Gastrocnemius medialis (tissue), 4 donors: ENCODE measurements at regions of chr7 and their contacts with region 1.

Region 1: DNA sequence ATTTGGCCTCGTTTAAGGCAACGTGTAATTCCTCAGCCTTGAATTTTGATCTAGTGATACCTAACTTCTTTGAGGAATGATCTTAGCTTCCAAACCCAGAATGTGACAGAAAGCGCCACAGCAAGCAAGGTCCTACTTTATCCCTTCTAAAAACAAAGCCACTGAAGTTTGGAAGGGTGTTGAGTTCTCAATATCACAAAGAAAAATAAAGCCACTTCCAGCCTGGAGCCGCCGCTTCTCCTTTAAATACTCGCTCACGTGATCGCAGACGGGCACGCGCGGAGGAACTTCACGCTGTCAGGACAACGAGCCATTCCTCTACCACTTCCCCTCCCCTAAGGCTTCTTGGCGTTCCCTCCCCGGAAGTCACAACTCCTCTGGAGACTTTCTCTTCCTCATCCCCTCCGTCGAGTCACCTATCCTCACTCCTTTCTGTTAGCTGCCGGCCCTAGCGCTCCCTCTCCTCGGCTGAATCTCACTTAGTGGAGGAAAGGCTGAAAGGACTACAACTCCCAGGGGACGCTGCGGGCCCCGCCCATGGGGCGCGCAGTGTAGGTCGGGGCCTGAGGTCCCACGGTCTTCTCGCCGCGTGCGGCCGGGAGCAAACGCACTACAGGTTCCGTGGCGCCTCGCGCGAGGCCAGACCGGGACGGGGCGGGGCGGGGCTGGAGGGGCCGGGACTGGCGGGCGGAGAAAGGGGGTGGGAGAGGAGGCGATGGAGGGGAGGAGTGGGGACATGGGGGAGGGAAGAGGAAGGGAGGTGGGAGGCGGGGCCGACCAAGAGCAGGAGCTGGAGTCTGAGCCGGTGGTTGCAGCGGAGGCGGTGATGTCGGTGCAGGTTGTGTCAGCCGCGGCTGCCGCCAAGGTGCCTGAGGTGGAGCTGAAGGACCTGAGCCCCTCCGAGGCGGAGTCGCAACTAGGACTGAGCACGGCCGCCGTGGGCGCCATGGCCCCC is at the start of gene AHCYL2:
- DNase-seq: peak; percentile 97
- ATAC-seq: peak; percentile 89 to 90
- H3K4me3 ChIP-seq: peak within 1 kb of the TSS; percentile 67 to 82 (median 70)
- H3K27ac ChIP-seq: peak within 1 kb of the TSS; percentile 91 to 98 (median 94)
- H3K4me1 ChIP-seq: peaks cover 31 to 36% of the 10 kb centered on the region in 2 donors
- H3K27me3 ChIP-seq: no peaks in the 10 kb centered on the region
- CTCF ChIP-seq: no peak
- POLR2A ChIP-seq: peak; percentile 51 to 59
- total RNA-seq, gene AHCYL2: 22.7 to 41.0 (median 35.7) TPM

Region 2: GRCh38 chr7:128904381-128905197 is 319.9 kb before region 1 on chr7:
- in situ Hi-C with region 1: no loop called
- intact Hi-C with region 1: no loop called
- DNase-seq: no peak
- ATAC-seq: peak in 1 of 2 donors; percentile 57
- H3K4me3 ChIP-seq: no peak overlapping the region
- H3K27ac ChIP-seq: no peak overlapping the region
- H3K4me1 ChIP-seq: no peaks in the 10 kb centered on the region
- H3K27me3 ChIP-seq: peaks cover 2 to 9% (median 5%) of the 10 kb centered on the region in 3 donors
- CTCF ChIP-seq: peak; percentile 19 to 69 (median 58)
- POLR2A ChIP-seq: no peak

Region 3: GRCh38 chr7:129271500-129272355 is 47.2 kb after region 1 on chr7:
- in situ Hi-C with region 1: no loop called
- intact Hi-C with region 1: loop called (anchors 2 kb)
- DNase-seq: no peak
- ATAC-seq: peak; percentile 49 to 56
- H3K4me3 ChIP-seq: no peak overlapping the region
- H3K27ac ChIP-seq: no peak overlapping the region
- H3K4me1 ChIP-seq: peaks cover 14 to 15% of the 10 kb centered on the region in 2 donors
- H3K27me3 ChIP-seq: no peaks in the 10 kb centered on the region
- CTCF ChIP-seq: peak; percentile 24 to 59 (median 46)
- POLR2A ChIP-seq: no peak

Region 4: DNA sequence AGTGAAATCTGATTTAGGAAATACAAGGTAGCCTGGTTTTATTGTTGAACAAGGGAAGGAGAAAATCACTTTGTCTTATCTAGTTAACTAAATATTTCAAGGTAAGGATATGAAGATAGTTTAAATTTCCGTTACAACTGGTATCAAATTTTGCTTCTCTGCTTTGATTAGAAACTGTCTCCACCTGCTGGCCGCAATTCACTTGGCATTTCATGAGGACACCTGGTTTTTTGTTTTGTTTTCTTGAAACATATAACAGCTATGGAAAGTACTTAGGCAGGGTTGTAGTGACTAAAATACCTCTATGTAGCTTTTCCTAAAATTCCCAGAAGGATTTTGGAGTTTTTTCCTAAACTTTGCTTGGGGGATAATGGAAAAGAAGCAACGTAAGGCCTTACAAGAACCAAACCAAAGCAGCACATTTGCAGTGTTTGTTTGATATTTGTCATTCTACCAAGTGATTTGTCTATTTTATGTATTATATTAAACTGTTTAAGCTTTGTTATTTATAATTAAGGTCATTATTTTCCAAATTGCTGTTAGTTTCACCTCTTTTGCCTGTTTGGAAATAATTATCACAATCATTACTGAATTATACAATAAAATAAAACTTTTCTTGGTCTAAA is 73.9 kb after region 1 on chr7:
- in situ Hi-C with region 1: loop called (anchors 5 to 10 kb)
- intact Hi-C with region 1: loop called (anchors 2 kb)
- DNase-seq: peak in 1 of 2 donors; percentile 32
- ATAC-seq: no peak
- H3K4me3 ChIP-seq: no peak overlapping the region
- H3K27ac ChIP-seq: no peak overlapping the region
- H3K4me1 ChIP-seq: peaks cover 16 to 27% of the 10 kb centered on the region in 2 donors
- H3K27me3 ChIP-seq: no peaks in the 10 kb centered on the region
- CTCF ChIP-seq: peak; percentile 58 to 77 (median 66)
- POLR2A ChIP-seq: no peak

Region 5: GRCh38 chr7:129367700-129368388 is 143.3 kb after region 1 on chr7:
- in situ Hi-C with region 1: no loop called
- intact Hi-C with region 1: no loop called
- DNase-seq: peak; percentile 53 to 74
- ATAC-seq: peak; percentile 86 to 94
- H3K4me3 ChIP-seq: no peak overlapping the region
- H3K27ac ChIP-seq: peak overlapping the region in 3 of 4 donors; percentile 28 to 47 (median 28)
- H3K4me1 ChIP-seq: peaks cover 12 to 17% of the 10 kb centered on the region in 2 donors
- H3K27me3 ChIP-seq: no peaks in the 10 kb centered on the region
- CTCF ChIP-seq: peak; percentile 77 to 92 (median 88)
- POLR2A ChIP-seq: no peak

Region 6: GRCh38 chr7:129611246-129612111 is 387.0 kb after region 1 on chr7 and contains the start of gene NRF1:
- in situ Hi-C with region 1: no loop called
- intact Hi-C with region 1: loop called (anchors 10 kb)
- DNase-seq: peak; percentile 82 to 89
- ATAC-seq: peak; percentile 88 to 89
- H3K4me3 ChIP-seq: peak within 1 kb of the TSS; percentile 75 to 91 (median 80)
- H3K27ac ChIP-seq: peak within 1 kb of the TSS; percentile 91 to 97 (median 94)
- H3K4me1 ChIP-seq: peaks cover 20 to 25% of the 10 kb centered on the region in 2 donors
- H3K27me3 ChIP-seq: no peaks in the 10 kb centered on the region
- CTCF ChIP-seq: peak in 2 of 5 experiments; percentile 29 to 43
- POLR2A ChIP-seq: peak; percentile 77 to 81
- total RNA-seq, gene NRF1: 11.3 to 26.3 (median 18.0) TPM

Region 7: DNA sequence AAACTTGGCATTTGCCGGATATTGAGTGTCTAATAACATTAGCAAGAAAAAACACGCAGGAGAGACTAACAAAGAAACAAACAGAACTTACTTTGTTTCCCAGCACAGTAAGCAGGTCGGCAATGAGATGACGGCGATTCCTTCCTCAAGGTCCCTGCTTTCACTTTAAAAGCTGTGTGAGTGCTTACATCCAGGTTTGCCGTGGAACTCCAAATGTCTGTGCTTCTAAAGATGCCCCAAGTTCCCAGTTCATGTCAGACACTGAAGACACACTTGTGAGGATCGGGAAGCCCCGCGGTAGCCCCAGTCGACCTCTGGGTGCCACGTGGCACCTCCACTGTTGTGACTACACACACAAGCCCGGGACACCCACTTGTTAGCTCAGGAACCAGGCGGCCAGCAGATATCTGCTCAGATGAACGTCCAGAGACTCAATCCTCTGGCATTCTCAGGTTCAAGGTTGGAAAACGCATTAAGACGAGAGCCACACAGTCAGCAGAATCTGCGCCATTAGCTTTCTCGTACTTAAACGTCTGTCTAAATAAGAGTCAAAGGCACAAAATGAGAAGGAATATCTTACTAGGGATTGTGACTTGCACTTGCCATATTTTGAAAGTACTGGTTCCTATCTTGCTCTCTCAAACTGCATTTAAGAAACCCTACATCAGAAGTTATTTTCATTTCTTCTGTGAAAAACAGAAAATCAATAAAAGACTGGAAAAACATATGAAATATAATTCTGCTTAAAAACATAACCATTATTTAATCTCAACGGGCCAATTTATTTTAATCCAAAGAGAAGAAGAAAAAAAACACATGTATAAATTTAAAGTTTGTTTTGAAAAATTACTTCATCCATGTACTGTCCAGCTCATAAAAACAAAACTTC is 1717.0 kb after region 1 on chr7:
- in situ Hi-C with region 1: no loop called
- intact Hi-C with region 1: loop called (anchors 10 kb)
- DNase-seq: peak; percentile 87 to 88
- ATAC-seq: peak; percentile 47 to 72
- H3K4me3 ChIP-seq: peak overlapping the region; percentile 61 to 81 (median 68)
- H3K27ac ChIP-seq: peak overlapping the region; percentile 91 to 97 (median 94)
- H3K4me1 ChIP-seq: peaks cover 35 to 74% of the 10 kb centered on the region in 2 donors
- H3K27me3 ChIP-seq: no peaks in the 10 kb centered on the region
- CTCF ChIP-seq: no peak
- POLR2A ChIP-seq: peak; percentile 60 to 90